ENCODE measurements at regions of chr10 and their contacts with region 1.

Region 1: DNA sequence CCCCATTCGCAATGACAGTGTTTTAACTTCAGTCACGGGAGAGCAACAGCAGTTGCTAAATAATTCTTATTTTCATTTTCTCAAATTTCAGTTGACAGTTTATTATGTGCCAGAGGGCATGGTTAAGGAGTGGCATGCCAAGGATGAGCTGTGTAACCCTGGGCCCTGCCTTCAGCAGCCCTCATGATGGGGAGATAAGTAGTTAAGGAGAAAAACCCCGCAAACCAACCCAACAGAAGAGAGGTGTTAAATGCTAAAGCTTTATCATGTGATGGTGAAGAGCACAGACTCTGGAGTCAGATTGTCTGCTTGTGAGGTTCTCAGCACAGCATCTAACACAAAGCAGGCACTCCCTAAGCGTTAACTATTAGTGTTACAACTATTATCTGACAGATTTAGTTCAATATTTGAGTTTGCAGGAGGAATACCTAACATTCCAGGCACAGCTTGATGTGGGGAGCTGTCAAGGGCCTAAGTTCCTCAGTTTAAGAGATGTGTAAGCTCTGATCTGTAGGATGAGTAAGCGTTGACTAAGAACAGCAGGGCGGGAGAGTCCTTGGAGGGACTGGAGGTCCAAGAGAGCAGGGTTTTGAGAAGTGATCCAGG is 29.6 kb downstream of the STAM start:
- DNase-seq: peak; percentile 77 to 82
- H3K4me3 ChIP-seq: no peak overlapping the region
- H3K4me3 Mint-ChIP-seq: peak overlapping the region; percentile 40
- H3K27ac Mint-ChIP-seq: peak overlapping the region; percentile 64
- H3K4me1 ChIP-seq: peaks cover 50% of the 10 kb centered on the region
- H3K4me1 Mint-ChIP-seq: peaks cover 24% of the 10 kb centered on the region
- H3K27me3 ChIP-seq: no peaks in the 10 kb centered on the region
- H3K27me3 Mint-ChIP-seq: no peaks in the 10 kb centered on the region
- CTCF ChIP-seq: no peak

Region 2: GRCh38 chr10:17643755-17644484 is 29.6 kb before region 1 on chr10 and contains the start of gene STAM:
- CTCF ChIA-PET with region 1: interaction called, 6 read pairs
- POLR2A ChIA-PET with region 1: interaction called, 25 read pairs
- intact Hi-C with region 1: no loop called
- DNase-seq: peak; percentile 96
- H3K4me3 ChIP-seq: peak within 1 kb of the TSS; percentile 58
- H3K4me3 Mint-ChIP-seq: peak within 1 kb of the TSS; percentile 94
- H3K27ac Mint-ChIP-seq: peak within 1 kb of the TSS; percentile 100
- H3K4me1 ChIP-seq: peaks cover 11% of the 10 kb centered on the region
- H3K4me1 Mint-ChIP-seq: peaks cover 22% of the 10 kb centered on the region
- H3K27me3 ChIP-seq: no peaks in the 10 kb centered on the region
- H3K27me3 Mint-ChIP-seq: no peaks in the 10 kb centered on the region
- CTCF ChIP-seq: no peak
- total RNA-seq, gene STAM: 51.9 and 59.1 TPM in 2 replicates

Region 3: DNA sequence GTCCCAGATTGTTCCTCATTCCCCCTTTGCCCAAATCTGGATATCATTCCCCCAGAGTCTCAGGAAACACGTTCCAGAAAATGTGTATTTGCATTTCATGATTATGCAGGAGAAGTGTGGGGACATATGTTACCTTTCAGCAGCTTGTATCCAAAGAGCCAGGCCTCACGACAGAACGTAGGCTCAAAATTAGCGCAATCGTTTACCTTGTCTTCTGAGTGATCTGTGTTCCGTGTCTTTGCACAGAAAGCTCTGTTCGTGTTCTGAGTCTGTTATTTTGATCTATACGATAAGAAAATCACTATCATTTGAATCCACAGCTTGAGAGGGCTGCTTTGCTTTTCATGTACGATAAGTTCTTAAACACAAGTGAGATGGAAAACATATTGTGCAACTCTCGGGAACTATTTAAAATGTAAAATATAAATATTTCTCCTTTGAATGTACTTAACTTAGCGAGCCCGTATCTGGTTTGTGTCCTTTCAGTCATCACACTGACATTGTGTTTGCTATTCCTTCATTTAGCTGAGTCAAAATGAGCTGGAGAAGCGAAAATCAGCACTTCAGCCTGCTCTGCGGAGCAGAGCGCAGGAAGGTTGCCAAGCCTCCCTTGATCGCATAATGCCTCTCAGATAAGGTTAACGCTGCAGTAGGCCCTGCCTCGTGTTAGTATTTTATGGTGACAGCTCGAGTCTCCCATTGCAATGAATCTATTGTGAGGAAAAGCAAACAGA is 386.4 kb after region 1 on chr10:
- CTCF ChIA-PET with region 1: no interaction called
- POLR2A ChIA-PET with region 1: no interaction called
- intact Hi-C with region 1: no loop called
- DNase-seq: no peak
- H3K4me3 ChIP-seq: no peak overlapping the region
- H3K4me3 Mint-ChIP-seq: no peak overlapping the region
- H3K27ac Mint-ChIP-seq: no peak overlapping the region
- H3K4me1 ChIP-seq: no peaks in the 10 kb centered on the region
- H3K4me1 Mint-ChIP-seq: no peaks in the 10 kb centered on the region
- H3K27me3 ChIP-seq: no peaks in the 10 kb centered on the region
- H3K27me3 Mint-ChIP-seq: no peaks in the 10 kb centered on the region
- CTCF ChIP-seq: no peak